ENCODE measurements at regions of chr16 and their contacts with region 1.

Region 1: DNA sequence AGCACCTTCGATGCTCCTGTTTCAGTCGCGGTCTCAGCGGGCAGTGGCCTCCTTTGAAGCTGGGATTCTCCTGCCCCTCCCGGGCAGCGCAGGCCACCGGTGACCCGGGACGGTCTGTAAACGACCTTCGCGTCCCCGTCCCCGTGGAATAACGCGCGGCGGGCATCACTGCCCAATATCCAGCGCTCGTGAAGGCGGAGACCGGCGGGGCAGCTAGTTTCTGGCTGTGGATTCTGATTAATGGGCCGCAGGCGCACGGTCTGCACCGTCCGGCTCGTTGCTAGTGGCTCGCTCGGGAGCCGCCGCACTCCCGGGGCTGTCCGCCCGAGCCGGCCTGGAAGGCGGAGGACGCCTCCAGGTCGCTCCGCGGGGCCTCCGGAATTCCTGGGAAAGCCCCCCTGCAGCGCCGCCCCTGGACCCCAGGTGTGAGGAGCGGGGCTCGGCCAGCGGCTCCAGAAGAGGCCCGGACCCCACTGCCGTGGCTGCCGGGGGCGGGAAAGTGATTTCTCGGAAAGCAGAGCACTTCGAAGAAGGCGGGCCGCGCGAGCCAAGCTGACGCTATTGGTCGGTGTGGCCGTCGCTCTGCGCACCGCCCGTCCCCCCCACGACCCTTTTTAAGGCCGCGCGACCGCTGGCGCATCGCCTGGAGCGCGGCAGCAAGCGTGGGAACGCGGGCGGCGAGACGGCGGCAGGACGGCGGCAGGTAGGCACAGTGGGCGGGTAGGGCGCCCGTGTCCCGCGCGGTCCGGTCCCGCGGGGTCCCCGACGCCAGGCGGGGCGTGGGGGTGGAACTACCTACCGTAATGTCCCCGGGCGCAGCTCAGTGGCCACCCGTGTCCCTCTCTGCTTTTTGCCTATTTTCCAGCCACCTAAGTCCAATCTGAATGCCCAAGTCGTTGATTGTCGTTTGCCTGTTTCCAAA is at the start of gene IRF8:
- DNase-seq: peak; percentile 70
- ATAC-seq: peak; percentile 86
- H3K4me3 Mint-ChIP-seq: peak within 1 kb of the TSS; percentile 70
- H3K27ac Mint-ChIP-seq: peak within 1 kb of the TSS; percentile 41
- H3K4me1 Mint-ChIP-seq: peaks cover 47% of the 10 kb centered on the region
- H3K27me3 Mint-ChIP-seq: peaks cover 62% of the 10 kb centered on the region
- total RNA-seq, gene IRF8: 8.4 to 11.1 TPM

Region 2: DNA sequence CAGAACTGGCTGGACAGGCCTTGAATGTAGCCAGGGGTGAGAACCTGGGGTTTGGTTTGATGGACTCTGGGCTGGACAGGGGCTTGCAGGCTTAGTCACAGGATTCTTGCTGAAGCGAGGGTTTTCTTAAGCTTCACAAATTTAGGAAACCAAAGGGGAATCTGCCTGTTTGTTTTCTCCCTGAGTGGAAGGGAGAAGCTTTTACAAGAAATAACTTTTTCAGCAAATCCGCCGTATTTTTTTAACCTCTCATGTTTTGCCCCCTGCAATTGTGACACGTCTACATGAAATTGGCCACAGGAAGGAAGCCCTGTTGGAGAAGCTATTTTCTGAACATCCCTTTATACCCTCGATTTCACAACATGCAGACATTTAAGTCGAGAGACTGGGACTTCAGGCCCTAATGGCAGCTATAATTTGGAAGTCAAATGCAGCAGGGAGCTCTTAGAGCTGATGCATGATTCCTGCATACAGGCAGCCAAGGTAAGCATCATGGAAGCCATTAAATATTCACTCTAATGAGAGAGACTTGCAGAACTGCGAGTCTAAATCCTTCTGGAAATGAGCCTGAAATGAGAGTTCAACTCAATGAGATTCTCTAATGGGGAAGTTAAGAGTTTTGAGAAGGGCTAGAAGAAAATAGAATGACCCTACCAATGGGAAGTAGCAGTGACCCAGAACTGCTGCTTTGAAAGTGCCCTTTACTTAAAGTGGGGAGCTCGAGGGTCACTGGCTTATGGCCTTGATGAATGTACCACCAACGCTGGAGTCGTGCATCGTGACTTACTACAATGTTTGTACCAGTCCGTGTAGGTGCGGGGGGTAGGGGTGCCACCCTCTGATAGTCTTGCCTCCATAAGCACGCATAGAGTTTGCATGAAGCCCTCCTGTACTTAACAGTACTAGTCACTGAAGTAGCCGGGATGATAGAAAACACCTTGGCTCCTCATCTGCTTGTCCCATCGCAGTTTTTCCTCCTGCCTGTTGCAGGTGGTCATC is 44.9 kb before region 1 on chr16:
- CTCF ChIA-PET with region 1: no interaction called
- DNase-seq: no peak
- ATAC-seq: no peak
- H3K4me3 Mint-ChIP-seq: no peak overlapping the region
- H3K27ac Mint-ChIP-seq: no peak overlapping the region
- H3K4me1 Mint-ChIP-seq: no peaks in the 10 kb centered on the region
- H3K27me3 Mint-ChIP-seq: peaks cover 13% of the 10 kb centered on the region

Region 3: DNA sequence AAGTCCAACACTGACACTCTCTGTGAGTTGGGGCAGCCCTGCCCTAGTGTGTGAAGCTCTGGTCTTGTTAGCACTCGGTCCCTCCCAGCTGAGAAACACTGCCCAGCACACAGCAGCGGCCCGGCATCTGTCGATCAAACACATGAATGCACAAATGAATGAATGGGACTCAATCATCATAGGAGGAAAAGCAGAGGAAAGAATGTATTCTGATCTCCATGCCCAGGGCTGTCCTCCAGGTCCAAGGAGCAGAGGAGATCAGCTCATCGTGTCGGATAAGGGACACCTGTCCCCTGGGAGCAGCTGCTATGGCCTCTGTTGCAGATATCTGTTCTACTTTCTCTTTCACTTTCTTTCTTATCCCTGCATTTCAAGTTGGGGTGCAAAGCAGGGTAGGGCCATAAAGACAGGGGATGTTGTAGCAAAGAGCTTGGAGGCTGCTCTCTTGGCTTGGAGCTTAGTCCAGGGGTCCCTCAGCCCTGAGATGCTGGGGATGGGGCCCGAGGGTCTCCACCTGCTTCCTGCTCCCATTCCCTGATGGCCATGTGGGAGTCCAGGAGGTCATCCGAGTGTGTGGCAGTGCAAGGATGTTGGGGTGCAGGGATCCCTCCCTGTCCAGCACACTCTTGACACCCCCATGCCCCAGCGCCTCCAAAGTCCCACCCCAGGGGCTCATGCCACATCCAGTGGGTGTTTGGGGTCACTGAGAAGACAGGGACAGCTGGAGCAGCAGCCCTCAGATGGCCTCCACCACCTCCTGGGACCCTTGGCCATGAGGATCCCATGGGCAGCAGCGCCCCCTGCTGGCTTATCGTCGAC is 88.4 kb after region 1 on chr16:
- CTCF ChIA-PET with region 1: interaction called, 14 read pairs
- DNase-seq: peak; percentile 49
- ATAC-seq: peak; percentile 52
- H3K4me3 Mint-ChIP-seq: peak overlapping the region; percentile 5
- H3K27ac Mint-ChIP-seq: no peak overlapping the region
- H3K4me1 Mint-ChIP-seq: peaks cover 42% of the 10 kb centered on the region
- H3K27me3 Mint-ChIP-seq: peaks cover 22% of the 10 kb centered on the region